ENCODE measurements at regions of chr12 and their contacts with region 1.

Region 1: GRCh38 chr12:47963340-47964040 is at the start of gene TMEM106C:
- DNase-seq: peak; percentile 90
- H3K4me3 Mint-ChIP-seq: peak within 1 kb of the TSS; percentile 99
- H3K27ac Mint-ChIP-seq: peak within 1 kb of the TSS; percentile 86
- H3K4me1 Mint-ChIP-seq: peaks cover 41% of the 10 kb centered on the region
- H3K27me3 Mint-ChIP-seq: peaks cover 17% of the 10 kb centered on the region
- total RNA-seq, gene TMEM106C: 139 and 143 TPM in 2 replicates

Region 2: GRCh38 chr12:46246021-46246700 is 1717.3 kb before region 1 on chr12:
- intact Hi-C with region 1: no loop called
- DNase-seq: no peak
- H3K4me3 Mint-ChIP-seq: no peak overlapping the region
- H3K27ac Mint-ChIP-seq: no peak overlapping the region
- H3K4me1 Mint-ChIP-seq: peaks cover 78% of the 10 kb centered on the region
- H3K27me3 Mint-ChIP-seq: no peaks in the 10 kb centered on the region

Region 3: DNA sequence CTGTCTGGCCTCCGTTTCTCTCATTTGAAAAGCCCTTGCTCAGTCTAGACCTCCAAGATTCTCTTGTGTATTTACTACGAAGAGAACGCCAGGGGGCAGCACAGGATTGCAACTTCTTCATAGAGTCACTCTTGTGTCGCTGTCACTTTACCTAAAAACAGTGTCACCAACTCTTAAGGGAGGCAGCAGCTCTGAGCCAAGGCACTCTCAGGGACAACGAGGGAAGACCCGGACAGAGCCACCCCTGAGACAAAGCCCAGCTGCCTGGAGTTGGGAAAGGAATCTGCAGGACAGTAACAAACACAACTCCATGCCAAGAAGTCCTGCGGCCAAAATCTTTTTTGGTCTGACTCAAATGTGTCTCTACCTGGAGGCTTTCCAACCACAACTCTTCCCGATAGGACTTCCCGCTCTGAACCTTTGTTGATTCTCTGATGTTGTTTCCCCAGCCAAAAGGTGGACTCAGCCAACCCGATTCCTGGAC is 248.1 kb before region 1 on chr12:
- intact Hi-C with region 1: loop called (anchors 1 kb)
- DNase-seq: peak; percentile 58
- H3K4me3 Mint-ChIP-seq: no peak overlapping the region
- H3K27ac Mint-ChIP-seq: no peak overlapping the region
- H3K4me1 Mint-ChIP-seq: peaks cover 29% of the 10 kb centered on the region
- H3K27me3 Mint-ChIP-seq: peaks cover 2% of the 10 kb centered on the region

Region 4: GRCh38 chr12:47837190-47838171 is 126.0 kb before region 1 on chr12:
- intact Hi-C with region 1: loop called (anchors 10 kb)
- DNase-seq: peak; percentile 41
- H3K4me3 Mint-ChIP-seq: no peak overlapping the region
- H3K27ac Mint-ChIP-seq: peak overlapping the region; percentile 67
- H3K4me1 Mint-ChIP-seq: peaks cover 84% of the 10 kb centered on the region
- H3K27me3 Mint-ChIP-seq: no peaks in the 10 kb centered on the region

Region 5: GRCh38 chr12:47889040-47889439 is 74.5 kb before region 1 on chr12:
- intact Hi-C with region 1: loop called (anchors 2 kb)
- DNase-seq: peak; percentile 54
- H3K4me3 Mint-ChIP-seq: peak overlapping the region; percentile 86
- H3K27ac Mint-ChIP-seq: peak overlapping the region; percentile 100
- H3K4me1 Mint-ChIP-seq: peaks cover 95% of the 10 kb centered on the region
- H3K27me3 Mint-ChIP-seq: no peaks in the 10 kb centered on the region

Region 6: DNA sequence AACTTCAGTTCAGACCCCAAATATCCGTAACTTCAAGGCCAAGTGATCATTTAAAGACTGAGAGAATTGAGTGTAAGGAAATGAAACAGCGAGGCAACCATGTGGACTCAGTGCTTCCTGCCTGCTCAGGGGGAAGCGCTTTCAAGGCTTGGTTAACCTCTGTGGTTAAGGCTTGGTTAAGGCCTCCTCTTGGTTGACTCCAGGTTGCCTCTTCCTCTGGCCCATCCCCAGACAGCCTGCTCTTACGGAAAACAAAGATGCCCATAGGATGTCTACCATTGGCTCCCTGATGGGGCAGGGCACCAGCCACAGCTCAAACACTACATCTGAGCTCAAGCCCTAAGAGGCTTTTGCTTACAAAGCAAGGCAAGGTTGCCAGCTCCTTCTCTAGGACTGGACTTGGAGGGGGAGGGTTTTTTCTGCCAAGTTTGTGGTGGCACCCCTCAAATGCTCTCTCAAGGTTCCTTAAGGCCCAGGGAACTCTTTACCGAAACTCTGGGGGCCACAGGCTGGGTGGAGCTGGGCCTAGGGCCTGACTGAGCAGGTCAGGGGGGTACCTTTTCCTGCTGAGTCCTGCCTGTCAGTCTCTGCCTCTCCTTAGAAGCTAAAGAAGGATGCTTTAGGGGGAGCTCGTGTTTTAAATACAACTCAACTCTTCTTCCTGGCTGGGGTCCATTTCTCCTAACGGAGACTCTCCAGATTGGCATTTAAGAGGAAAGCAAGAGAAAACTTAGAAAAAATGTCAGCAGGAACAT is 27.0 kb after region 1 on chr12:
- intact Hi-C with region 1: loop called (anchors 1 kb)
- DNase-seq: peak; percentile 64
- H3K4me3 Mint-ChIP-seq: no peak overlapping the region
- H3K27ac Mint-ChIP-seq: peak overlapping the region; percentile 15
- H3K4me1 Mint-ChIP-seq: peaks cover 17% of the 10 kb centered on the region
- H3K27me3 Mint-ChIP-seq: peaks cover 66% of the 10 kb centered on the region

Region 7: GRCh38 chr12:48157018-48157888 is 193.8 kb after region 1 on chr12 and contains the start of gene ASB8:
- intact Hi-C with region 1: loop called (anchors 2 kb)
- DNase-seq: peak; percentile 98
- H3K4me3 Mint-ChIP-seq: peak within 1 kb of the TSS; percentile 94
- H3K27ac Mint-ChIP-seq: peak within 1 kb of the TSS; percentile 86
- H3K4me1 Mint-ChIP-seq: peaks cover 21% of the 10 kb centered on the region
- H3K27me3 Mint-ChIP-seq: no peaks in the 10 kb centered on the region
- total RNA-seq, gene ASB8: 33.3 and 36.1 TPM in 2 replicates

Region 8: DNA sequence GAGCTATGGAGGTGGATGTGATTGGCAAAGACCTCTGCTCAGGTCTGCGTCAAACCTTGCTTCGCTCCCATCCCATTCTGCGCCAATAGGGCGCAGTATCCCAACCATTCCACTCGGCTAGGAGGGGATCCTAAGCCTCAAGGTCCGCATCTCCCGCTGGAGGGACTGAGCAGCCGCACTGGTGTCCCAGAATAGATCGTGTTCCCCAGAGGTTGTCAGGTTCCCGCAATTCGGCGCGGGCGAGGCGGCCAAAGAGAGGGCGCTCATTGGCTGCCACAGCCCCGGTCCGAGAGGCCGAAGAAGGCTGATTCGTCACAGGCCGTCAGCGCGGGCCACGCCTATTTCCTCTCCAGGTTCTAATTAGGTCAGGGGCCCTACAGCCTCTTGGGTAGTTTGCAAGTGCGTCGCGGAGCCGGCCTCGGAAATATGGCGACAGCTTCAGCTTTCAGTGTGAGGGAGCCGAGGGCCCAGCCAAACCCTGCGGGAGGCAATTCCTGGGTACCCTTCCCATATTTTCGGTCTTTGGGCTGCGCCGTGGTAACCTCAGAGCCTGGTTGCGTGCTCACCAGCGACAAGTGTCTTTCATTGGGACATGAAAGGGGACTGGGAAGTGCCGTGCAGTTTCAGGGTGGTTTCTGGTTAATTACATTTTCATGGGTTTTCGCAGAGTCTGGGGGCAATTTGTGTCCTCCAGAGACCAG is 234.6 kb after region 1 on chr12:
- intact Hi-C with region 1: loop called (anchors 1 kb)
- DNase-seq: peak; percentile 90
- H3K4me3 Mint-ChIP-seq: peak overlapping the region; percentile 88
- H3K27ac Mint-ChIP-seq: peak overlapping the region; percentile 86
- H3K4me1 Mint-ChIP-seq: peaks cover 44% of the 10 kb centered on the region
- H3K27me3 Mint-ChIP-seq: peaks cover 21% of the 10 kb centered on the region